Gastrocnemius medialis (tissue), 4 donors: ENCODE measurements at regions of chrX and their contacts with region 1.

Region 1: GRCh38 chrX:64205735-64206491 is 405 bp upstream of the AMER1 start:
- DNase-seq: peak; percentile 92 to 96
- ATAC-seq: peak; percentile 79 to 82
- H3K4me3 ChIP-seq: peak overlapping the region; percentile 60 to 66 (median 64)
- H3K27ac ChIP-seq: peak overlapping the region; percentile 79 to 96 (median 90)
- H3K4me1 ChIP-seq: peaks cover 21 to 27% of the 10 kb centered on the region in 2 donors
- H3K27me3 ChIP-seq: no peaks in the 10 kb centered on the region
- CTCF ChIP-seq: peak in 1 of 5 experiments; percentile 19
- POLR2A ChIP-seq: peak; percentile 69 to 81

Region 2: DNA sequence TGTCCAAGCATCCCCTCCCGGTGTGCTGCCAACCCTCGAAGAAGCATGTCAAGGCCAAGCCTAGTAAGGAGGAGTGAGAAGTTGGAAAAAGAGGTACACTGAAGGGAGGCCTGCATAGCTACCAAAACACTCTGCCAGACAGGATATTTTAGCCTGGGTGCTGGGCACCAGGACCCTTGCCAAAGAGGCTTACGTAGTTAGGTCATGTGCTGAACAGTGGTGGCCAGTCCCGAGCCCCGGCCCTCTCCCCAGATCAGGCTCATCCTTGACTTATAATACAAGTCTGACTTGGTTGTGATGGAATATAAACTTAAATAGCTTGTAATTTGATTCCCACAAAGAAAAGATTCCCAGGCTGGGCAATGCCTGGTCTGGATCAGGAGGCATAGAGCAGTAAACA is 570.2 kb before region 1 on chrX:
- in situ Hi-C with region 1: no loop called
- intact Hi-C with region 1: no loop called
- DNase-seq: no peak
- ATAC-seq: no peak
- H3K4me3 ChIP-seq: no peak overlapping the region
- H3K27ac ChIP-seq: no peak overlapping the region
- H3K4me1 ChIP-seq: no peaks in the 10 kb centered on the region
- H3K27me3 ChIP-seq: no peaks in the 10 kb centered on the region
- CTCF ChIP-seq: no peak
- POLR2A ChIP-seq: no peak

Region 3: DNA sequence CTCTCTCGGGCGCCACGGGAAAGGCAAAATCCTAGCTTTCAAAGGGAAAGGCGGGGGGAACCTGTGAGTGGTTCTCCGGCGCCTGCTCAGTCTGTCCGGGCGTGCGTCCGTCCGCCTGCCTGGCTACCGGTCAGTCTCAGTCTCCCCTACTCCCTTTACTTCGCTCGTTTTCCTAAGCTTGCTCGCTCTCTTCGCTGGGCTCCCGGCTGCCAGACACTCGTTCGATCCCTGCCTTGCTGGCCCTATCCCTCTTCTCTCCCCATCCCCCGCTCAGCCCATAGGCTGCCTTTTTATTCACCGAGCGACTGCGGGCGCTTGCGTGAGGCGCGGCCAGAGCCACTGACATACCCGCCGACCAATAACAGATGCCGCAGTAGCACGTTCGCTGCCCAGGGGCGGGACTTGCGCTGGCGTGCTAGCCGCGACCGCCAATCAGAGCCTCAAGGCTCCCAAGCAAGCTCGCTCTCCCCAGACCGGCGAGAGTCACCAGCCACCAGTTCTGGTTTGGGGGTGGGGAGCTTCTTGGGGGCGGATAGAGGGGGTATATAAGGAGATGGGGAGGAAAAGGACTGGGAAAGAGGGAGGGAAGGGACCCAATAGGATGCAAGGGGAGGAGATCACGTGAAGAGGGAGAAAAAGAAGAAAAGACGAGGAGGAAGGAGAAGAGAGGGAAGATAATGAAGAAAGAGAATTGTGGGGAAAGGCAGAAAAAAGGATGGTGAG is 450.9 kb before region 1 on chrX:
- in situ Hi-C with region 1: loop called in 2 of 4 experiments (anchors 25 kb)
- intact Hi-C with region 1: loop called (anchors 10 kb)
- DNase-seq: peak; percentile 87 to 91
- ATAC-seq: peak; percentile 94 to 96
- H3K4me3 ChIP-seq: peak overlapping the region; percentile 66 to 79 (median 75)
- H3K27ac ChIP-seq: peak overlapping the region; percentile 87 to 94 (median 90)
- H3K4me1 ChIP-seq: peaks cover 9 to 15% of the 10 kb centered on the region in 2 donors
- H3K27me3 ChIP-seq: peaks cover 0 to 2% (median 0%) of the 10 kb centered on the region in 3 donors
- CTCF ChIP-seq: no peak
- POLR2A ChIP-seq: peak; percentile 64 to 81

Region 4: DNA sequence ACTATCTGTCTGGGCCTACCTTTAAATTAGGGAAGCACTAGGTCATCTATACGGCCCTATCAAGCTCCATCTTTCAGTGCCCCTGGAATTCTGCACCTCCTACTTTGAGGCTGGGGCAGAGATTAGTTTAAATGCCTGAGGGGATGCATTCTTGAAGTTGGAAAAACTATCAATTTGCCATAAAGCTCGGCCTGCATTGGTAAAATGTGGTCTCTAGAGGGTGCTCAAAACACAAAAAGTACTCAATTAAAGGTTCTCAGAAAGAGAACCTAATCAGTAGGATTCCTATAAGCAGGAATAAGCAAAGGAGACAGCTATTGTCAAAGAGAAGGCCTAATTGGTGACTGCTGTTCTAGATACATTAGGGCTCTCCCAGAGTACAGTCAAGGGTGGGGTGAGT is 112.2 kb before region 1 on chrX:
- in situ Hi-C with region 1: no loop called
- intact Hi-C with region 1: loop called (anchors 10 kb)
- DNase-seq: no peak
- ATAC-seq: peak in 1 of 2 donors; percentile 33
- H3K4me3 ChIP-seq: no peak overlapping the region
- H3K27ac ChIP-seq: no peak overlapping the region
- H3K4me1 ChIP-seq: no peaks in the 10 kb centered on the region
- H3K27me3 ChIP-seq: no peaks in the 10 kb centered on the region
- CTCF ChIP-seq: peak in 1 of 5 experiments; percentile 40
- POLR2A ChIP-seq: no peak

Region 5: GRCh38 chrX:64229145-64229544 is 23.2 kb after region 1 on chrX:
- in situ Hi-C with region 1: no loop called
- intact Hi-C with region 1: loop called (anchors 1 kb)
- DNase-seq: peak in 1 of 2 donors; percentile 22
- ATAC-seq: peak; percentile 28 to 68
- H3K4me3 ChIP-seq: peak overlapping the region in 2 of 4 donors; percentile 50 to 60
- H3K27ac ChIP-seq: peak overlapping the region; percentile 83 to 89 (median 84)
- H3K4me1 ChIP-seq: peaks cover 0 to 3% of the 10 kb centered on the region in 2 donors
- H3K27me3 ChIP-seq: no peaks in the 10 kb centered on the region
- CTCF ChIP-seq: no peak
- POLR2A ChIP-seq: no peak

Region 6: DNA sequence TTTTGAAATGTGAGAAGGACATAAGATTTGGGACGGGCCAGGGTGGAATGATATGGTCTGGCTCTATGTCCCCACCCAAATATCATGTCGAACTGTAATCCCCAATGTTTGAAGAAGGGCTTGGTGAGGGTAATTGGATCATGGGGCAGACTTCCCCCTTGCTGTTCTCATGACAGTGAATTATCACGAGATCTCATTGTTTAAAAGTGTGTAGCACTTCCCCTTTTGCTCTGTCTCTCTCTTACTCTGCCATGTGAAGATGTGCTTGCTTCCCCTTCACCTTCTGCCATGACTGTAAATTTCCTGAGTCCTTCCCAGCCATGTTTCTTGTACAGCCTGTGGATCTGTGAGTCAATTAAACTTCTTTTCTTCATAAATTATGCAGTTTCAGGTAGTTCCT is 171.8 kb after region 1 on chrX:
- in situ Hi-C with region 1: no loop called
- intact Hi-C with region 1: no loop called
- DNase-seq: no peak
- ATAC-seq: no peak
- H3K4me3 ChIP-seq: no peak overlapping the region
- H3K27ac ChIP-seq: no peak overlapping the region
- H3K4me1 ChIP-seq: no peaks in the 10 kb centered on the region
- H3K27me3 ChIP-seq: no peaks in the 10 kb centered on the region
- CTCF ChIP-seq: no peak
- POLR2A ChIP-seq: no peak

Region 7: GRCh38 chrX:64394874-64395567 is 189.1 kb after region 1 on chrX and contains the start of gene MTMR8:
- in situ Hi-C with region 1: no loop called
- intact Hi-C with region 1: loop called (anchors 10 kb)
- DNase-seq: peak; percentile 5 to 56
- ATAC-seq: peak; percentile 58 to 89
- H3K4me3 ChIP-seq: peak within 1 kb of the TSS; percentile 48 to 62 (median 58)
- H3K27ac ChIP-seq: peak within 1 kb of the TSS in 3 of 4 donors; percentile 5 to 33 (median 20)
- H3K4me1 ChIP-seq: no peaks in the 10 kb centered on the region
- H3K27me3 ChIP-seq: no peaks in the 10 kb centered on the region
- CTCF ChIP-seq: no peak
- POLR2A ChIP-seq: no peak
- total RNA-seq, gene MTMR8: 0.46 to 1.1 (median 0.92) TPM

Region 8: DNA sequence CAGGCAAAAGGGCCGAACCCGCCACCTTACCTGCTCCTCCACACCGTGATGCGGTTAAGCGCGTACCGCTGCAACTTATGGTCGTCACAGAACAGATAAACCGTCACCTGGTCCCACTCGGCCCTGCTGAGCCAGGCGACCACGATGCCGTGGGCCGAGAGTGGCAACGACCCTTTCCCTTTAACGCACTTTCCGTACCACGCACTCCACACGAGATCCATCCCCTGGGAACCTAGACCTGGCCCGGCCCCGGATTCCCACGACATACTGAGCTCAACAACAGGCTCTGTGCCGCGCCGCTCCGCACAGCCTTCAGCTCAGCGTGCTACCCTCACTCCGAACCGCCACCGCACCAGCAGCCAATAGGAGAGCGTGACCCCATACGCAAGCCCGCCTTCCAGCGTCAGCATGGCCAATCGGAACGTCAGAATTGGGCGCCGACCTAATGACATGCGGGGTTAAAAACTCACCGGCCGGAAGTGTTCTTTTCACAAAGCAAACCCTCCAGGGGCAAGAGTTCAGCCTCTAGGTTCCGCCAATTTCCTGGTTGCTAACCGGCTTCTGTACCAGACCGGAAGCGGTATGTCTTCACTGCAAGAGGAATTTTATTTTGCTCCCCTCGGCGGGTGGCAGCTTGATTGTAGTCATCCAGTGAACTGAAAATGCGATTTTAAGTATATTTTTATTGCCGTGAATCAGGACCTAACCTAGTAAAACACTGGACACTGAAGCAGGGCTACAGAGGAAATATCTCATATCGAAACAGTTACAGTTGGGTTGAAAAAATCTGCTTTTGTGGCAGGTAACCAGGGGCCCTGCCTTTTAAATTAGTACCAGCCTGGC is 1328.8 kb after region 1 on chrX and contains the start of gene LAS1L:
- in situ Hi-C with region 1: no loop called
- intact Hi-C with region 1: loop called (anchors 10 kb)
- DNase-seq: peak; percentile 88 to 93
- ATAC-seq: peak; percentile 99
- H3K4me3 ChIP-seq: peak within 1 kb of the TSS; percentile 65 to 76 (median 74)
- H3K27ac ChIP-seq: peak within 1 kb of the TSS; percentile 70 to 84 (median 76)
- H3K4me1 ChIP-seq: peaks cover 4 to 12% of the 10 kb centered on the region in 2 donors
- H3K27me3 ChIP-seq: no peaks in the 10 kb centered on the region
- CTCF ChIP-seq: no peak
- POLR2A ChIP-seq: peak; percentile 44 to 51
- total RNA-seq, gene LAS1L: 7.2 to 8.3 (median 7.6) TPM